Right ventricle myocardium inferior (tissue), 1 donor: ENCODE measurements at regions of chr14 and their contacts with region 1.

Region 1: DNA sequence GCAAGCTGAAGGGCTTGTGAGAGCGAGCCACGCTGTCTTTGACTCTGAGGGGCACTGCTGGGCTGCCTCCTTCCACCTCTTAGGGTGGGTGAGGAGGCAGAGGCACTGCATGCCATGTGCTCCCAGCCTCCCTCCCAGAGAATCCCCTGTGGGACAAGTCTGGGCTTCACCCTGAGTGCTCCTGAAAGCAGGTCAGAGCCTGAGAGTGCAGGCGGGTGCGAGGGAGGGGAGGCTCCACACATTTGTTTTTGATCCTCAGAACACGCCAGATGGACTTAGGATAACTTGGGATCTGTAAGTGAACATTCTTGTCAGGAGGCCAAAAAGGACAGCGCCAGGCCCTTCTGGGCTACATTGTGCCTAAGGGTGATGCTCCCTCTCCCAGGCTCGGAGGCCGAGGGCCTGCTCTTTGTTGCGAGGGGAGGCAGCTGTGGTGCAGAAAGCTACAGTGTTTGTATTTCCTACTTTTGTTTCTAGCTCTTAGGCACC is 155.4 kb downstream of the TMX1 start:
- DNase-seq: peak; percentile 73
- ATAC-seq: peak; percentile 70

Region 2: GRCh38 chr14:51293149-51293911 is 102.1 kb before region 1 on chr14:
- intact Hi-C with region 1: loop called (anchors 10 kb)
- DNase-seq: no peak
- ATAC-seq: peak; percentile 92

Region 3: GRCh38 chr14:51333901-51334521 is 61.4 kb before region 1 on chr14:
- intact Hi-C with region 1: loop called (anchors 5 kb)
- DNase-seq: no peak
- ATAC-seq: peak; percentile 41

Region 4: DNA sequence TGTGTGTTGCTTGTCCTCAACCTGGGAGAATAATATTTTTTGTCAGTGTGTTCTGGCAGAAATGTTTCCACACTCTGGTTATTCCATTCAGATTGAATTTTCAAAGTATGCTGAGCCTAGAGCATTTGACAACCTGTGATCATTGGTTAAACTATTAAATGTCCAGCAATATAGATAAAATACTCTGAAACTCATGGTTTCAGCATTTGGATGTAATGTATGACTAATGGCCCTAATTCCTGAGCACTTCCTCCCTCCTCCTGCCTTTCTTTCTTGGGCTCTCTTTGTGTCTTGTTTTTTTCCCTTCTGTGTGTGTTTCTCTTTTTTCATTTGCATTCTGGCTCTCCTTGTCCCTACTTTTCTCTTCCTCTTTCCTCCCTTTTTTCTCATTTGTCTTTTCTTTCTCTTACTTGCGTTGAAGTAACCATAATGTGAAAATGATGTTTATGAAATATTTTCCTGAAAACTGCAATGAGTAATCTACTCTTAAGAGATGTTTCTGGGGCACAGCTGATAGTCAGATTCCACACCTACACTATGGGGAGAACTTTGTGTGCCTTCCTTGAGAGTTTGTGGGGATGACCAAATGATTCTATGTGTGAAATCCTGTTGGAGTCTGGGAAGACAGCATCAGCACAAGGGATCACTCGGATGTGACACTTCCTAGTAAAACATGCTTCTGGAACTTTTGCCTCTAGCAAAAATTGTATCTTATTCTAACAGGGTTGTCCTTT is 330.9 kb after region 1 on chr14:
- intact Hi-C with region 1: no loop called
- DNase-seq: no peak
- ATAC-seq: no peak